ENCODE measurements at regions of chr2 and their contacts with region 1.

Region 1: DNA sequence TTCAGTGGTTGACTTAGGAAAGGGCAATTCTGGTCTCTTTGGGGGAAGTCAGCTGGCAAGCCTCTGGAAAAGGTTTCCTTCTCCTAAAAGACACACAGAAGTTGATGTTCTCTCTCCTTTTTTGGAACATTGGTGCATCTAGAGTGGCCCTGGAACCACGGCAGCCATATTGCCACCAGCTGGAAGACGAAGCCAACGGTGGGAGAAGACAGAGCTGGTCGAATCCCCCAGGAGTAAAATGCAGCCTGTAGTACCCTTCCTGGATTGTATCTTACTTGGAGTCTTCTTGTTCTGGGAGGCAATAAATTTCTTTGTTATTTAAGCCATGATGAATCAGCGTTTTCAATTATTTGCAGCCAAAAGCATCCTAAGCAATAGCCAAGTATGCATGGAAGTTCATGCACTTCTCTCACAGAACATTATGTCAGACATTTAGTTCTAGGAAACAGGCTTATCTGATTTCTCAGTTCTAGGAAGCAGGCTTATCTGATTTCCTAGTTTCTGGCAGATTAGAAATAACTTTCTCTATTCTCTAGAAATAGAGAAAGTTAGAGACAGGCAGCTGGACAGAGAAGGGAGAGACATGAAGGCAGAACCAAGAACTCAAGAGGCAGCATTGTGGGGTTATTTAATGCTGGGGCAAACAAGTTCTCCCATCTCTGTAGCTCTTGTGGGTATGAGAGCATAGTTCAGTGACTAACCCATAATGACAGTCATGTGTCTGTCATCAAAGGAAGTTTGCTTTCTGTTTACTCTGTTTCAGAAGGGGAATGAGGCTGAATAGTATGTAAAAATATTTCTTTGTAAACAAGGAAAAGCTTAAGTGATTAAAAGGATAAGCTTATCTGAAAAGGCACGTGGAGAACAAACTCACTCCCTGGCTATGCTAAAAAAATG is 40.5 kb upstream of the NABP1 start:
- DNase-seq: peak; percentile 25 to 72 (median 40)
- ATAC-seq: peak; percentile 81
- H3K4me3 ChIP-seq: peak overlapping the region; percentile 22
- H3K27ac ChIP-seq: peak overlapping the region; percentile 85
- H3K4me1 ChIP-seq: peaks cover 0 to 30% of the 10 kb centered on the region in 2 experiments; a peak in 4 of 5 replicates
- H3K27me3 ChIP-seq: no peaks in the 10 kb centered on the region
- CTCF ChIP-seq: no peak
- EP300 ChIP-seq: peak; percentile 88
- POLR2A ChIP-seq: no peak
- RAD21 ChIP-seq: peak in 1 of 2 experiments; percentile 21; a peak in 1 of 4 replicates

Region 2: GRCh38 chr2:190927301-190927700 is 710.1 kb before region 1 on chr2:
- CTCF ChIA-PET with region 1: no interaction called
- POLR2A ChIA-PET with region 1: no interaction called
- in situ Hi-C with region 1: no loop called
- intact Hi-C with region 1: no loop called
- DNase-seq: no peak
- ATAC-seq: no peak
- H3K4me3 ChIP-seq: no peak overlapping the region
- H3K27ac ChIP-seq: no peak overlapping the region
- H3K4me1 ChIP-seq: no peaks in the 10 kb centered on the region
- H3K27me3 ChIP-seq: no peaks in the 10 kb centered on the region
- CTCF ChIP-seq: no peak
- EP300 ChIP-seq: no peak
- POLR2A ChIP-seq: no peak
- RAD21 ChIP-seq: no peak

Region 3: GRCh38 chr2:191597186-191597751 is 40.2 kb before region 1 on chr2:
- CTCF ChIA-PET with region 1: no interaction called
- POLR2A ChIA-PET with region 1: no interaction called
- in situ Hi-C with region 1: no loop called
- intact Hi-C with region 1: loop called (anchors 5 kb)
- DNase-seq: peak; percentile 36 to 85 (median 54)
- ATAC-seq: peak; percentile 91
- H3K4me3 ChIP-seq: no peak overlapping the region
- H3K27ac ChIP-seq: peak overlapping the region; percentile 48; the same call in 2 of the 3 replicates
- H3K4me1 ChIP-seq: peaks cover 0 to 14% of the 10 kb centered on the region in 2 experiments; a peak in 3 of 5 replicates
- H3K27me3 ChIP-seq: no peaks in the 10 kb centered on the region
- CTCF ChIP-seq: no peak
- EP300 ChIP-seq: peak; percentile 98
- POLR2A ChIP-seq: no peak
- RAD21 ChIP-seq: no peak; a peak in 1 of 4 replicates

Region 4: GRCh38 chr2:191857259-191857805 is 219.9 kb after region 1 on chr2:
- CTCF ChIA-PET with region 1: no interaction called
- POLR2A ChIA-PET with region 1: no interaction called
- in situ Hi-C with region 1: no loop called
- intact Hi-C with region 1: no loop called
- DNase-seq: no peak
- ATAC-seq: no peak
- H3K4me3 ChIP-seq: no peak overlapping the region
- H3K27ac ChIP-seq: no peak overlapping the region
- H3K4me1 ChIP-seq: peaks cover 0 to 23% of the 10 kb centered on the region in 2 experiments; a peak in 3 of 5 replicates
- H3K27me3 ChIP-seq: no peaks in the 10 kb centered on the region
- CTCF ChIP-seq: no peak
- EP300 ChIP-seq: no peak
- POLR2A ChIP-seq: no peak
- RAD21 ChIP-seq: no peak

Region 5: DNA sequence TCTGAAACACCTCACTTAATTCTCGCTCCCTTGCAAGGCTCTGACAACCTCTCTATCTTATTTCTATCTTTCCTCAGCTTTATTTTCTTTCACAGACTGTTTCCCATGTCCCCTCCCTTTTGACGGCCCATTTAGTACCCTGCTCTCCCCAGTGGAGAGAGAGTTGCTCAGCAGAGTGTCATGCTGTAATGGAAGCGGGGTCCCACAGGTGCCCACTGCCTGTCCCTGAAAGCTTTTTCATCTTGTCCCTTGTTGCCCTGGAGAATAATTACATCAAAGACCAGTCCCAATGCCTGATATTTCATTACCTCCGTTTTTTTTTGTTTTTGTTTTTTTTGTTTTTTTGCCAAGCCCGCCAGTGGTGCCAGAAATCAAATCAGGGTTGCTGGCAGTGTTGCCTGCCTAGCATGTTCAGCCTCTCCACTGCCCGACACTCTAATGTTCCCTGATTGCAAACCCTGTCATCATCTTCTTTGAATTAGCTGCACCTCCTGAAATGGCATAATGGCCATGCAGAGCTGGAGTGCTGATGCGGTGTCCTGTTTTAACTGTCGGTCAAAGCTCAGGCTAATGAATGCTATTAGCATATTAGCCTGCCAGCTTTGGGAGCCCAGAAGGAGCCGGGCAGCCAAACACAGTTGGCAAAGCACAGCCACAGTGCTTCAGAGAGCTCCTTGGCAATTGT is 280.7 kb after region 1 on chr2:
- CTCF ChIA-PET with region 1: no interaction called
- POLR2A ChIA-PET with region 1: no interaction called
- in situ Hi-C with region 1: no loop called
- intact Hi-C with region 1: no loop called
- DNase-seq: no peak
- ATAC-seq: no peak
- H3K4me3 ChIP-seq: no peak overlapping the region
- H3K27ac ChIP-seq: no peak overlapping the region
- H3K4me1 ChIP-seq: no peaks in the 10 kb centered on the region
- H3K27me3 ChIP-seq: no peaks in the 10 kb centered on the region
- CTCF ChIP-seq: no peak
- EP300 ChIP-seq: no peak
- POLR2A ChIP-seq: no peak
- RAD21 ChIP-seq: no peak

Measured in K562 (cell line).